ENCODE measurements at regions of chr21 and their contacts with region 1.

Region 1: GRCh38 chr21:44792702-44793591 is 8.7 kb downstream of the UBE2G2 start:
- DNase-seq: peak in 8 of 9 experiments; percentile 29 to 76 (median 54)
- ATAC-seq: peak; percentile 97
- H3K4me3 ChIP-seq: no peak overlapping the region
- H3K4me3 Mint-ChIP-seq: no peak overlapping the region
- H3K27ac ChIP-seq: no peak overlapping the region
- H3K27ac Mint-ChIP-seq: peak overlapping the region; percentile 49
- H3K4me1 ChIP-seq: peaks cover 10% of the 10 kb centered on the region
- H3K4me1 Mint-ChIP-seq: peaks cover 64% of the 10 kb centered on the region
- H3K27me3 ChIP-seq: no peaks in the 10 kb centered on the region
- H3K27me3 Mint-ChIP-seq: no peaks in the 10 kb centered on the region
- CTCF ChIP-seq: peak; percentile 90

Region 2: DNA sequence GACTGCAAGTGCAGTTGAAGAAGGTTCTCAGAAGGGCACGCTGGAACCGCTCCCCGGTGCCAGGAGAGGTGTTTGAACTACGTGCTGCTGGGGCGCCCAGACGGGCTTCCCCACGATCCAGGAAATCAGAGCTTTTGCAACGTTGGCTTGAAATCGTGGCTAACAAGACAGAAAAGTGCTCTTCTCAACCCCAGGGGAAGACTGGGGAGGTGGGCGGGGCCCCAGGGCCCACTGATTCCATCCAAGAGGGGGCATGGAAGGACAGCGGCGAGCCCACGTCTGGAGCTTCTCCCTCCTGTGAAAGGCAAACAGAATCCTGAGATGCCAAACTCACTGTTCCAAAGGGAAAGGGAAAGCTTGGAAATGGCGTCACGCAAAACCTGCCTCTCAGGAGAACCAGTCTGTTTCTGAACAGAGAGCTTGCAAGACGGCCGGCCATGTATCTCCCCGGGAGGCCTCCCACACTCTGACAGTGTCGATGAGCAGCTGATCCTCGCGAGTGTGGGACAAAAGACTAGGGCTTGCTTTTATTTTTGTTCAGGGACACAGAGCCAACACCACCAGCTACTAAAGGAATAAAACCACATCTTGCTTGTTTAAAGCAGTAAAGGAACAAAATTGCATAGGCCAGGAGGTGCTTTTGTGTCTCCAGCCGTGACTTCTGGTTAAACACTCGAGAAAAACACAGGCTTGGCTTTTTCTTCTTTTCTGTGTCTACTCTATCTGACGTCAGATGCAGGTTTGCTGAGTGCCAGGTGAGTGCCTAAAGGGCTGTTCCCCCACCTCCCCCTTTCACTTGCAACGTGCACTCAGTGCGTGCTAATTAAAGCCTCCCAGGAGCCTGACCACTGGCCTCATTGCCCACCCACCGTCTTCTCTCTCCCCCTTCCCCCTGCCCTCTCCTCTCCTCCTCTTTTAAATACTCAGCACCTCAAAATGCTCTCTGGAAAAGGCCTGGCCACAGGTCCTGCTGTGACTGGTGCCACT is 296.1 kb before region 1 on chr21:
- CTCF ChIA-PET with region 1: interaction called, 12 read pairs
- POLR2A ChIA-PET with region 1: no interaction called
- intact Hi-C with region 1: no loop called
- DNase-seq: no peak
- ATAC-seq: no peak
- H3K4me3 ChIP-seq: no peak overlapping the region
- H3K4me3 Mint-ChIP-seq: no peak overlapping the region
- H3K27ac ChIP-seq: no peak overlapping the region
- H3K27ac Mint-ChIP-seq: no peak overlapping the region
- H3K4me1 ChIP-seq: no peaks in the 10 kb centered on the region
- H3K4me1 Mint-ChIP-seq: no peaks in the 10 kb centered on the region
- H3K27me3 ChIP-seq: peaks cover 0 to 5% of the 10 kb centered on the region in 2 experiments
- H3K27me3 Mint-ChIP-seq: peaks cover 7% of the 10 kb centered on the region
- CTCF ChIP-seq: no peak

Region 3: DNA sequence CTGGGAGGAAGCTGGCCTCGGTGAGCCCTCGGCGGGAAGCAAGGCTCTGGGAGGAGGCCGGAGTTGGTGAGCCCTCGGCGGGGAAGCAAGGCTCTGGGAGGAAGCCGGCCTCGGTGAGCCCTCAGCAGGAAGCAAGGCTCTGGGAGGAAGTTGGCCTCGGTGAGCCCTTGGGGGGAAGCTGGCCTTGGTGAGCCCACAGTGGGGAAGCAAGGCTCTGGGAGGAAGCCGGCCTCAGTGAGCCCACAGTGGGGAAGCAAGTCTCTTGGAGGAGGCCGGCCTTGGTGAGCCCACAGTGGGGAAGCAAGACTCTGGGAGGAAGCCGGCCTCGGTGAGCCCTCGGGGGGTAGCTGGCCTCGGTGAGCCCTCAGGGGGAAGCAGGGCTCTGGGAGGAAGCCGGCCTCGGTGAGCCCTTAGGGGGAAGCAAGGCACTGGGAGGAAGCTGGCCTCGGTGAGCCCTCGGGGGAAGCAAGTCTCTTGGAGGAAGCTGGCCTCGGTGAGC is 289.0 kb before region 1 on chr21:
- CTCF ChIA-PET with region 1: interaction called, 118 read pairs
- POLR2A ChIA-PET with region 1: no interaction called
- intact Hi-C with region 1: no loop called
- DNase-seq: peak in 1 of 9 experiments; percentile 17
- ATAC-seq: no peak
- H3K4me3 ChIP-seq: no peak overlapping the region
- H3K4me3 Mint-ChIP-seq: no peak overlapping the region
- H3K27ac ChIP-seq: no peak overlapping the region
- H3K27ac Mint-ChIP-seq: peak overlapping the region; percentile 49
- H3K4me1 ChIP-seq: peaks cover 9% of the 10 kb centered on the region
- H3K4me1 Mint-ChIP-seq: peaks cover 9% of the 10 kb centered on the region
- H3K27me3 ChIP-seq: no peaks in the 10 kb centered on the region
- H3K27me3 Mint-ChIP-seq: no peaks in the 10 kb centered on the region
- CTCF ChIP-seq: no peak